HCT116 (cell line): ENCODE measurements at regions of chr4 and their contacts with region 1.

Region 1: DNA sequence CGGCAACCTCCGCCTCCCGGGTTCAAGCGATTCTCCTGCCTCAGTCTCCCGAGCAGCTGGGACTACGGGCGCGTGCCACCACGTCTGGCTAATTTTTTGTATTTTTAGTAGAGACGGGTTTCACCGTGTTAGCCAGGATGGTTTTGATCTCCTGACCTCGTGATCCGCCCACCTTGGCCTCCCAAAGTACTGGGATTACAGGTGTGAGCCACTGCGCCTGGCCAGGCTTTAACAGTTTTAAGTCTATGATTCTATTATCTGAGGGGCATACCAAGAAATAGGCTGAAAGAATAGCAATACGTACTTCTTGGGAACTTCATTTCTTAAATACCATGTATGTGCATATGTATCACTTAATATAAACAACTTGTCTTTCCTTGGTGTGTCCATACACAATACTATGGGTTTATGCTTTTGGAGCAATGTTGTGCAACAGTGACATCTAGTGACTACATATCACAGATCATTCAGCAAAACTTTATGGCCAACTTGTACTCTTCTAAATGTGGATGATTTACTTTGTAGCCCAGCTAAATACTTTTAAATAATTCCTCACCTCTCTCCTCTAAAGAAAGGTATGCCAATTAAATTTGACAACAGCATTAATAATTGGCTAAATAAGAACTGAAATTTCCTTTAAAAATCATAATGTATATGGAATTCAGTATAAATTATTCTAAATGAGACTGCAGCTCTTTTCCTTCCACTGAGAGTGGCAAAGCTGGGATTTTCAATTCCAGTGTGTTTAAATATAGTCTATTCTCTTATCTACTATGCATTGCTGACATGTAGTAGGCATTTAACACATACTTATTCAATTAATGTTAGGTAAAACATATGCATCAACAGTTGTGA is 10.4 kb downstream of the SLC9B1 start:
- DNase-seq: peak; percentile 68
- ATAC-seq: peak; percentile 94
- H3K4me3 ChIP-seq: no peak overlapping the region
- H3K27ac ChIP-seq: no peak overlapping the region
- H3K4me1 ChIP-seq: no peaks in the 10 kb centered on the region
- H3K27me3 ChIP-seq: no peaks in the 10 kb centered on the region
- CTCF ChIP-seq: peak; percentile 60 to 91 (median 86)
- POLR2A ChIP-seq: no peak
- RAD21 ChIP-seq: peak; percentile 95

Region 2: GRCh38 chr4:102344954-102345794 is 663.9 kb before region 1 on chr4 and contains the start of gene SLC39A8:
- CTCF ChIA-PET with region 1: no interaction called
- POLR2A ChIA-PET with region 1: no interaction called
- RAD21 ChIA-PET with region 1: no interaction called
- intact Hi-C with region 1: loop called (anchors 1 kb)
- DNase-seq: peak; percentile 66
- ATAC-seq: peak; percentile 84
- H3K4me3 ChIP-seq: peak within 1 kb of the TSS; percentile 59 to 65
- H3K27ac ChIP-seq: peak within 1 kb of the TSS; percentile 57; the same call in 1 of the 2 replicates
- H3K4me1 ChIP-seq: peaks cover 3 to 25% of the 10 kb centered on the region in 2 experiments; a peak in 3 of 4 replicates
- H3K27me3 ChIP-seq: no peaks in the 10 kb centered on the region
- CTCF ChIP-seq: peak; percentile 48 to 82 (median 72); a peak in 5 of 6 replicates
- POLR2A ChIP-seq: peak; percentile 48
- RAD21 ChIP-seq: peak; percentile 70
- total RNA-seq, gene SLC39A8: 13.2 TPM

Region 3: GRCh38 chr4:102430461-102430910 is 578.6 kb before region 1 on chr4:
- CTCF ChIA-PET with region 1: interaction called, 5 read pairs
- POLR2A ChIA-PET with region 1: no interaction called
- RAD21 ChIA-PET with region 1: no interaction called
- intact Hi-C with region 1: loop called (anchors 1 kb)
- DNase-seq: no peak
- ATAC-seq: no peak
- H3K4me3 ChIP-seq: peak overlapping the region; percentile 52 to 65
- H3K27ac ChIP-seq: peak overlapping the region; percentile 52; the same call in 1 of the 2 replicates
- H3K4me1 ChIP-seq: peaks cover 18 to 29% of the 10 kb centered on the region in 2 experiments; a peak in 3 of 4 replicates
- H3K27me3 ChIP-seq: no peaks in the 10 kb centered on the region
- CTCF ChIP-seq: no peak
- POLR2A ChIP-seq: no peak
- RAD21 ChIP-seq: no peak

Region 4: DNA sequence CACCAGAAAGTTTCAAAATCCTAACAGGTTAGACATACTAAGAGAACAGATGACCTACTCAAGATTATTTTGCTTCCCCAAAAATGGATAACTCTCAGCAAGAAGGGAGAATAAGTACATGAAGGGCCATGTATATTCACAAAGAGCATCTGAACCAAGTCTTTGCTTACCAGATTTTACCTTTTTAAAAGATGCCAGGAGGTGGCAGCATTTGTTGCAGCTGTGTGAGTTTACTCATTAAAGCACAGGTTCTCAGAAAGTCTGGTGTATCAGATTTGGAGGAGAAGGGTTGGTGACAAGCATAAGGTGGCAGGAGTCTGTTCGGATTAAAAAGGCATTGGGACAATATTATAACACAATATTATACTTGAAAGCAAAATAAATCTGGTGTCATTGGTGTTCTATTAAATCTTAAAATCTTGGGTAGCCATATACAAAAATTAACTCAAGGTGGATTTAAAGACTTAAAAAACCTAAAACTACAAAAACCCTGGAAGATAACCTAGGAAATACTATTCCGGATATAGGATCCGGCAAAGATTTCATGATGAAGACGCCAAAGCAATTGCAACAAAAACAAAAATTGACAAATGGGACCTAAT is 559.2 kb before region 1 on chr4:
- CTCF ChIA-PET with region 1: interaction called, 7 read pairs
- POLR2A ChIA-PET with region 1: no interaction called
- RAD21 ChIA-PET with region 1: no interaction called
- intact Hi-C with region 1: loop called (anchors 2 kb)
- DNase-seq: peak; percentile 42
- ATAC-seq: peak; percentile 82
- H3K4me3 ChIP-seq: no peak overlapping the region
- H3K27ac ChIP-seq: no peak overlapping the region
- H3K4me1 ChIP-seq: no peaks in the 10 kb centered on the region
- H3K27me3 ChIP-seq: no peaks in the 10 kb centered on the region
- CTCF ChIP-seq: peak; percentile 54 to 82 (median 80)
- POLR2A ChIP-seq: no peak
- RAD21 ChIP-seq: peak; percentile 88

Region 5: GRCh38 chr4:102663073-102663472 is 346.0 kb before region 1 on chr4:
- CTCF ChIA-PET with region 1: no interaction called
- POLR2A ChIA-PET with region 1: no interaction called
- RAD21 ChIA-PET with region 1: no interaction called
- intact Hi-C with region 1: no loop called
- DNase-seq: no peak
- ATAC-seq: no peak
- H3K4me3 ChIP-seq: no peak overlapping the region
- H3K27ac ChIP-seq: no peak overlapping the region
- H3K4me1 ChIP-seq: no peaks in the 10 kb centered on the region
- H3K27me3 ChIP-seq: no peaks in the 10 kb centered on the region
- CTCF ChIP-seq: no peak
- POLR2A ChIP-seq: no peak
- RAD21 ChIP-seq: no peak

Region 6: DNA sequence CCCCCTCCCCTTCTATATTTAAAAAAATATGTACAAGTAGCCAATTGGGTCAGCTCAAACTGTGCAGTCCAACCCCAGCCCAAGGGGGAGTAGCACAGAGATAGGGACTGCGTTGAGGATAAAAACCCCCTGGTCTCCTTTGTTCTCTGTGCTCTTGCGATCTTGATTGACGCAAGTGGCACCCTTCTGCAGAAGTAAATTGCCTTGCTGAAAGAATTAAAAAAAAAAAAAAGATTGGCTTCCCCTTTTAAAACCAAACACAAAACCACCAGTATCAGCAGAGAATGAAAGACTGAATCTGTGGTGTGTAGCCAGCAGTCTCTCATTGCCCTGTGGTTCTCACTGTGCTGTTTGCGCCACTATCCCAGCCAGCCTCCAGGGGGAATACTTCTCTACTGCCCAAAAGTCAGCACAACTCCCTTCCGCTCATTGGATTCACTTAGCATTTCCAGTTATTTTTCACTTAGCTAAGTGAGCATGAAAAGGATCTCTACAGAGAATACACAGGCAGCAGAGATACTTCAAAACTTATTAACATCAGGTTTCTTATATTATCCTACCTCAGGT is 278.1 kb before region 1 on chr4:
- CTCF ChIA-PET with region 1: interaction called, 4 read pairs
- POLR2A ChIA-PET with region 1: no interaction called
- RAD21 ChIA-PET with region 1: no interaction called
- intact Hi-C with region 1: loop called (anchors 1 kb)
- DNase-seq: no peak
- ATAC-seq: peak; percentile 87
- H3K4me3 ChIP-seq: no peak overlapping the region
- H3K27ac ChIP-seq: no peak overlapping the region
- H3K4me1 ChIP-seq: no peaks in the 10 kb centered on the region
- H3K27me3 ChIP-seq: no peaks in the 10 kb centered on the region
- CTCF ChIP-seq: peak; percentile 30 to 61 (median 53); a peak in 4 of 6 replicates
- POLR2A ChIP-seq: no peak
- RAD21 ChIP-seq: peak; percentile 24; the same call in 1 of the 2 replicates

Region 7: GRCh38 chr4:102826890-102827673 is 182.0 kb before region 1 on chr4 and contains the start of gene UBE2D3:
- CTCF ChIA-PET with region 1: no interaction called
- POLR2A ChIA-PET with region 1: interaction called, 3 read pairs
- RAD21 ChIA-PET with region 1: no interaction called
- intact Hi-C with region 1: loop called (anchors 5 kb)
- DNase-seq: peak; percentile 92
- ATAC-seq: peak; percentile 58
- H3K4me3 ChIP-seq: peak within 1 kb of the TSS; percentile 76 to 83
- H3K27ac ChIP-seq: peak within 1 kb of the TSS; percentile 90
- H3K4me1 ChIP-seq: peaks cover 9 to 27% of the 10 kb centered on the region in 2 experiments
- H3K27me3 ChIP-seq: no peaks in the 10 kb centered on the region
- CTCF ChIP-seq: no peak; a peak in 1 of 6 replicates
- POLR2A ChIP-seq: peak; percentile 67
- RAD21 ChIP-seq: no peak
- total RNA-seq, gene UBE2D3: 302 TPM

Region 8: DNA sequence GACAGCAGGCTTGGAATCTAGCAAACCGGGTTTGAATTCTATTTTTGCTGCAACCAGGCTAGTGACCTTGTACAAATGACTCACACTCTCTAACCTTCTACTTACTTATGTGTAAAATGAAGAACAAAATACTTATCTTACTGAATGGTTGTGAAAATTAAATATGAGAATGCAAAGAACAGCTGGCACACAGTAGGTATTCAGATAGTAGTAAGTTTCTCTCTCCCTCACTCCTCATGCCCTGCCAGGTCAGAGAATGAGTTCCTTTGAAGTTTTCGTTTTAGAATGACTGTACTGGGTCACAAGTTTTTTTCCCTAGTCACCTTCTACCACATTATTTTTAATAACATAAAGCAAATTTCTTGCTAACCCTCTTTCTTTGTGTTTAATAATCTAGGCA is 107.3 kb before region 1 on chr4:
- CTCF ChIA-PET with region 1: no interaction called
- POLR2A ChIA-PET with region 1: no interaction called
- RAD21 ChIA-PET with region 1: no interaction called
- intact Hi-C with region 1: no loop called
- DNase-seq: no peak
- ATAC-seq: no peak
- H3K4me3 ChIP-seq: no peak overlapping the region
- H3K27ac ChIP-seq: no peak overlapping the region
- H3K4me1 ChIP-seq: peaks cover 0 to 3% of the 10 kb centered on the region in 2 experiments; a peak in 1 of 4 replicates
- H3K27me3 ChIP-seq: no peaks in the 10 kb centered on the region
- CTCF ChIP-seq: no peak
- POLR2A ChIP-seq: no peak
- RAD21 ChIP-seq: no peak